Activated CD4-positive, alpha-beta T cell treated with anti-CD3 and anti-CD28 coated beads, Interleukin-2, amount 10 ng/mL, durations not matched to agents 24 days and 14 days (primary cell): ENCODE measurements at regions of chr16 and their contacts with region 1.

Region 1: GRCh38 chr16:71845639-71846430 is at the start of gene ATXN1L:
- DNase-seq: peak; percentile 99
- H3K4me3 Mint-ChIP-seq: peak within 1 kb of the TSS; percentile 96
- H3K27ac Mint-ChIP-seq: peak within 1 kb of the TSS; percentile 97
- H3K4me1 Mint-ChIP-seq: peaks cover 45% of the 10 kb centered on the region
- H3K27me3 Mint-ChIP-seq: no peaks in the 10 kb centered on the region
- total RNA-seq, gene ATXN1L: 16.7 and 19.3 TPM in 2 replicates

Region 2: GRCh38 chr16:71767060-71767900 is 78.6 kb before region 1 on chr16:
- intact Hi-C with region 1: no loop called
- DNase-seq: no peak
- H3K4me3 Mint-ChIP-seq: no peak overlapping the region
- H3K27ac Mint-ChIP-seq: peak overlapping the region; percentile 9
- H3K4me1 Mint-ChIP-seq: peaks cover 12% of the 10 kb centered on the region
- H3K27me3 Mint-ChIP-seq: no peaks in the 10 kb centered on the region

Region 3: DNA sequence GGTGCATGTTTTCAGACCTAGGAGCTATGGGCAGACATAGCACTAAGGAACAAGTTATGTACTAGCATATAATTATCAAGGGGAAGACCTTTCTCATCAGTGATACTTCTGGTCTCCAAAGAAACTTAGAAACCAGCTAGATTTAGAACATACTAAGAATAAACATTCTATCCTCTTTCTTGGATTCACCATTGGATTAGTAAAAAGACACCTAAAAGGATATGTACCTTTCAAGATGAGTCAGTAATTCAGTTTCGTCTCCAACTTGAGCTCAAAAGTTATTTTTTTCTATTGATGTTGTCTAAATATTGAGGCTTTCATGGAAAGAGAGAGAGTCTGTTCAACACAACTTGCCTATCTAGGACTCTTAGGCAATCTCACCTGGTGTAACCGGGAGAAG is 25.0 kb after region 1 on chr16:
- intact Hi-C with region 1: loop called (anchors 2 kb)
- DNase-seq: no peak
- H3K4me3 Mint-ChIP-seq: no peak overlapping the region
- H3K27ac Mint-ChIP-seq: no peak overlapping the region
- H3K4me1 Mint-ChIP-seq: peaks cover 17% of the 10 kb centered on the region
- H3K27me3 Mint-ChIP-seq: no peaks in the 10 kb centered on the region

Region 4: GRCh38 chr16:72008424-72009216 is 162.8 kb after region 1 on chr16 and contains the start of gene DHODH:
- intact Hi-C with region 1: loop called (anchors 1 kb)
- DNase-seq: peak; percentile 99
- H3K4me3 Mint-ChIP-seq: peak within 1 kb of the TSS; percentile 91
- H3K27ac Mint-ChIP-seq: peak within 1 kb of the TSS; percentile 93
- H3K4me1 Mint-ChIP-seq: peaks cover 22% of the 10 kb centered on the region
- H3K27me3 Mint-ChIP-seq: peaks cover 5% of the 10 kb centered on the region
- total RNA-seq, gene DHODH: 31.8 and 33.7 TPM in 2 replicates